Activated naive CD4-positive, alpha-beta T cell treated with anti-CD3 and anti-CD28 coated beads, Interleukin-2, amount 10 ng/mL, durations not matched to agents 7 days and 5 days (primary cell): ENCODE measurements at regions of chr19 and their contacts with region 1.

Region 1: DNA sequence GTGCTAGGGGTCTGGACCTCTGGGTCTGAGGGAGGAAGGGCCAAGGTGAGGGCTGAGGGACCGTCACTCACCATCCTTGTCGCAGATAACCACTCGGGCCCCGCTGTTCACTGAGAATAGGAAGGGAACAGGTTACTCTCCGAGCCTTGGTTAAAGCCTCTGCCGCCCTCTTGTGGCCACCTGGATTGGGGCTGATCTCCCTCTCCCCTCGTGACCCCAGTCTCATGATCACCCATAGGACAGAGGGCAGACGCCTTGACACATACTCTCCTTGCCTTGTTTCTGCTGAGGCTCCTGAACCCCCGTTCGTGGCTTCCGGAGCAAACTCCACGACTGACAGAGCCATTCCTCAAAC is 580 bp downstream of the HSD17B14 start:
- DNase-seq: peak; percentile 96
- H3K4me3 Mint-ChIP-seq: peak overlapping the region; percentile 76
- H3K27ac Mint-ChIP-seq: peak overlapping the region; percentile 77
- H3K4me1 Mint-ChIP-seq: peaks cover 23% of the 10 kb centered on the region
- H3K27me3 Mint-ChIP-seq: peaks cover 26% of the 10 kb centered on the region

Region 2: DNA sequence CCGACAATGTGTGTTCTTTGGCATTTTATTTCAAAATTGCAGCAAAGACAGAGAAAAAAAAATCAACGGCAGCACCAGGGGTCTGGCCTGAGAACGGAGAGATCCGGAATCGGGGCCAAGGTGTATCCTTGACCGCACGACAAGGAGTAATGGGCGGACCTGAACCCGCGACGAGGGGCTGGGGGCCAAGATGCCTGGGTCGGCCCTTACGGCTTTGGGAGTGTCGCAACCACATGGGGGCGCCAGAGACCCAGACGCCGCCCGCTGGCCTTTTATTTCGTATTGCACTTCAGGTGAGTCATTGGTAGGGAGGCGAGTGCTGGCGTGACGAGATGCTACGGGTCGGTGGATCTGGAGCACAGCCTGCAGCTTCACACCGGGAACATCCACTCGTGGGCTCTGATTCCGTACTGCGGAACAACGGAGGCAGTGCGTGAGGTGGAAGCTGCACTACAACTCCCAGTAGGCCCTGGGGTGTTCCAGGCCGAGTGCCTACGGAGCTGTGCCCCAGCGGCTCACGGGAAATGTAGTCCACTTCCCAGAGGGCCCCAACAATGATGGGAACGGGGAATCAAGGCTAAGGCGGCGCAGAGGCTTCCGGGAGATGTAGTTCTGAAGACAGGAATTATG is 40.5 kb before region 1 on chr19:
- CTCF ChIA-PET with region 1: interaction called, 176 read pairs
- DNase-seq: peak; percentile 92
- H3K4me3 Mint-ChIP-seq: peak overlapping the region; percentile 86
- H3K27ac Mint-ChIP-seq: peak overlapping the region; percentile 80
- H3K4me1 Mint-ChIP-seq: peaks cover 8% of the 10 kb centered on the region
- H3K27me3 Mint-ChIP-seq: no peaks in the 10 kb centered on the region

Region 3: DNA sequence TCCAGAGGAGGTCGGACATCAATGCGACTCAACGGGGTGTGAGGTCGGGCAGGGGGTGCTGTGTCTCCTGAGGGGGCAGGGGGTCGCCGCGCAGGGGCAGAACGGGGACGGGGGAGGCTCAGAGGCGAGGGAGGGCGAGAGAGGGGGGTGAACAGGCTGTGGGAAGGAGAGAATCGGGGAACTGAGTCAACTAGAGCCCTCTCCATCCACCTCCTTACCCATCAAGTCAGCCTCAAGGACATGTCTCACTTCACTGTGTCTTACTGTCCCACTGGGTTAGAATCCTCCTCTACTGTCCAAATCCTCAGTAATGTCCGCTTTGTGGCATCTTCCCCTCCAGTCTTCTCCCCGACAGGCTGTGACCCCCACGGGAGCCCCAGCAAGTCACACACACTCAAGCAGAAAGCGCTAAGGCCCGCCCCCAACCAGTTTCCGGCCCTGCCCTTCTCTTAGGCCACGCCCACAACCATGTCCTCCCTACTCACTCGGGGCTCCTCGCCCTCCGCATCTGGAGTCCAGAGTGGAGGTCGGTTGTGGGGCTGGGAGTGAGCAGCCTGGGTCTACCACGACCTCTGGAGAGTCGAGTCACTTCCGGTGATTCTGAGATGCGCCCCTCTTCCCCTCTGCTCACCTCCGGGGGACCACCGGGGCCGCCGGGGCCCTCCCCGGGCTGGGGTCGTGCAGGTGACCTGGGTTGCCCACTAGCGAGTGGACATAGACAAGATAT is 23.4 kb after region 1 on chr19:
- CTCF ChIA-PET with region 1: no interaction called
- DNase-seq: peak; percentile 91
- H3K4me3 Mint-ChIP-seq: peak overlapping the region; percentile 98
- H3K27ac Mint-ChIP-seq: peak overlapping the region; percentile 89
- H3K4me1 Mint-ChIP-seq: peaks cover 9% of the 10 kb centered on the region
- H3K27me3 Mint-ChIP-seq: peaks cover 31% of the 10 kb centered on the region